Mammary epithelial cell (primary cell): ENCODE measurements at regions of chr18 and their contacts with region 1.

Region 1: GRCh38 chr18:10851824-10852319 is 297.5 kb downstream of the PIEZO2 start:
- DNase-seq: peak; percentile 10
- H3K4me3 ChIP-seq: no peak overlapping the region
- H3K27ac ChIP-seq: no peak overlapping the region
- H3K4me1 ChIP-seq: no peaks in the 10 kb centered on the region
- H3K27me3 ChIP-seq: no peaks in the 10 kb centered on the region
- CTCF ChIP-seq: peak; percentile 60 to 67

Region 2: DNA sequence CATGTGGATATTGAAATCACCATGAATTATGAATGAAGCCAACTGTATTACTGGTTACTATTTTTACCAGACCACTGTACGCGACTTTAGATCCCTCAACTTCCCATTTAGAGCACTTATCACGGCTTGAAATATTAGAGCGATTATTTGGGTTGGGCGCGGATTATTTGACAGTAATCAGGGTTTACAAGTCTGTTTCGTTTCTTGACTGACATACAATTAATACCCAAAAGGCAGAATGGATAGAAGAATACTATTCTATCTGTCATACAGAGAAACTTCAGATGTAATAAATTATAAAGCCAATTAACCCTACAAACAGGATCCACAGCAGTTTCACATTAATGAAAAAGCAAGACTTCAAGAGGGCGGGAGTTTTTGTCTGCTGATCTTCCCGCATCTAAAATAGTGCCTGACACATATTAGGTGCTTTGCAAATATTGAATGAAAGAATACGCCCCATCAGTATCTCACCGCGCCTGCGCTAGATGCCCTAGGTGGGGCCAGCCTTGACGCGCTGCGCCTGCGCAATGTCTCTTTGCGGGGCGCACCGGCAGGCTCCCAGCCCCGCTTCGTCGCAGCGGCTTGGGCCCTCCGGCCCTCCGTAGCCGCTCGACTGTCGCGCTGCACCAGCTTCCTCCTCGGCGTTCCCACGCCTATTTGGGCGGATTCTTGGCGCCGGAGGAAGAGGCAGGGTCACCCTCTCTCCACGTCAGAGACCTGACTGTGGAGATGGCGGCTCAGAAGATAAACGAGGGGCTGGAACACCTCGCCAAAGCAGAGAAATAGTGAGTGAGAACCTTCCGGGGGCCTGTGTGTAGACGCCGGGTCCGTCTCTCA is 326.3 kb before region 1 on chr18 and contains the start of gene NAPG:
- CTCF ChIA-PET with region 1: interaction called, 10 read pairs
- dilution Hi-C with region 1: no loop called
- in situ Hi-C with region 1: no loop called
- intact Hi-C with region 1: no loop called
- DNase-seq: peak; percentile 91
- H3K4me3 ChIP-seq: peak within 1 kb of the TSS; percentile 67 to 86 (median 78)
- H3K27ac ChIP-seq: peak within 1 kb of the TSS; percentile 74
- H3K4me1 ChIP-seq: peaks cover 23% of the 10 kb centered on the region
- H3K27me3 ChIP-seq: no peaks in the 10 kb centered on the region
- CTCF ChIP-seq: no peak
- total RNA-seq, gene NAPG: 31.0 to 51.3 TPM

Region 3: GRCh38 chr18:11040823-11041656 is 189.2 kb after region 1 on chr18:
- CTCF ChIA-PET with region 1: interaction called, 3 read pairs
- dilution Hi-C with region 1: no loop called
- in situ Hi-C with region 1: no loop called
- intact Hi-C with region 1: loop called (anchors 1 kb)
- DNase-seq: peak; percentile 1
- H3K4me3 ChIP-seq: no peak overlapping the region
- H3K27ac ChIP-seq: no peak overlapping the region
- H3K4me1 ChIP-seq: no peaks in the 10 kb centered on the region
- H3K27me3 ChIP-seq: no peaks in the 10 kb centered on the region
- CTCF ChIP-seq: peak; percentile 18 to 53

Region 4: GRCh38 chr18:11310476-11311086 is 458.7 kb after region 1 on chr18:
- CTCF ChIA-PET with region 1: no interaction called
- dilution Hi-C with region 1: no loop called
- in situ Hi-C with region 1: no loop called
- intact Hi-C with region 1: loop called (anchors 10 kb)
- DNase-seq: peak; percentile 19
- H3K4me3 ChIP-seq: no peak overlapping the region
- H3K27ac ChIP-seq: no peak overlapping the region
- H3K4me1 ChIP-seq: no peaks in the 10 kb centered on the region
- H3K27me3 ChIP-seq: no peaks in the 10 kb centered on the region
- CTCF ChIP-seq: peak; percentile 70 to 83